Activated CD8-positive, alpha-beta T cell treated with anti-CD3 and anti-CD28 coated beads for 36 hours (primary cell): ENCODE measurements at regions of chr7 and their contacts with region 1.

Region 1: GRCh38 chr7:128209229-128210035 is 31.6 kb upstream of the LEP start:
- DNase-seq: peak; percentile 74
- ATAC-seq: peak; percentile 96
- H3K4me3 Mint-ChIP-seq: no peak overlapping the region
- H3K27ac Mint-ChIP-seq: no peak overlapping the region
- H3K4me1 Mint-ChIP-seq: no peaks in the 10 kb centered on the region
- H3K27me3 Mint-ChIP-seq: peaks cover 9% of the 10 kb centered on the region
- CTCF ChIP-seq: peak; percentile 96

Region 2: DNA sequence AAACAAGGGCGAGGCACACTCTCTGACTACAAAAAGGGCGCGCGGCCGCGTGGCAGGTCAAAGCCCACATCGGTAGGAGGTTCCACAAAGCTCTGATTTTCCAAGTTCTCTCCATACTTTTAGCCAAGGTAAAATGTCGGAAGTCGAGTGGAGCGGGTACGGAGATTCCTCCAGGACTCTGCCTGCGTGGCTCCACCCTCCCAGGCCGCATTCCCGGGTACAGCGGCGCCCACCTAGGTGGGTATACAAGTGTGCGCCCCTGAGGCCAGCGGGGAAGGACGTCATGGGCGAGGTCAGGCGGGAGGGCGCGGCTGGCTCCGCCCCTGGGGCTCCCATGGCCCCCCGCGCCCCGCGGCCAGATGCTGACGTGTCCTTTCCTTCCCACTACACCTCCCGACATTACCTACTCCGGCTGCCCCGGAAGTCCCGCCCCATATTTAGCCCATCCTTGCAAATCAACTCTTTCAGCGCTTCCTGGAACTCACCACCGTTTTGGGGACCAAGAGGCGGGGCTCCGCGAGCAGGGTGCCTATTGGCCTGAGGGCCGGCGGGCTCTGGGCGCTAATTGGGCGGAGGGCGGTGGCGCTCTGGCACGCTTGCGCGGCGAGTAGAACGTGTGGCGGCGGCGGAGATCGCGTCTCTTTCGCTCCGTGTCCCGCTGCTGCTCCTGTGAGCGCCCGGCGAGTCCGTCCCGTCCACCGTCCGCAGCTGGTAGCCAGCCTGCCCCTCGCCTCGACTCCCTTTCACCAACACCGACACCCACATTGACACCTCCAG is 557.7 kb before region 1 on chr7 and contains the start of gene SND1:
- CTCF ChIA-PET with region 1: no interaction called
- POLR2A ChIA-PET with region 1: no interaction called
- intact Hi-C with region 1: no loop called
- DNase-seq: peak; percentile 99
- ATAC-seq: peak; percentile 95
- H3K4me3 Mint-ChIP-seq: no peak within 1 kb of the TSS
- H3K27ac Mint-ChIP-seq: peak within 1 kb of the TSS; percentile 89
- H3K4me1 Mint-ChIP-seq: peaks cover 28% of the 10 kb centered on the region
- H3K27me3 Mint-ChIP-seq: no peaks in the 10 kb centered on the region
- CTCF ChIP-seq: no peak
- total RNA-seq, gene SND1: 206 to 208 TPM

Region 3: GRCh38 chr7:127708788-127709187 is 500.6 kb before region 1 on chr7:
- CTCF ChIA-PET with region 1: interaction called, 118 read pairs
- POLR2A ChIA-PET with region 1: no interaction called
- intact Hi-C with region 1: loop called (anchors 1 kb)
- DNase-seq: peak; percentile 84
- ATAC-seq: peak; percentile 72
- H3K4me3 Mint-ChIP-seq: no peak overlapping the region
- H3K27ac Mint-ChIP-seq: no peak overlapping the region
- H3K4me1 Mint-ChIP-seq: peaks cover 2% of the 10 kb centered on the region
- H3K27me3 Mint-ChIP-seq: no peaks in the 10 kb centered on the region
- CTCF ChIP-seq: peak; percentile 76

Region 4: DNA sequence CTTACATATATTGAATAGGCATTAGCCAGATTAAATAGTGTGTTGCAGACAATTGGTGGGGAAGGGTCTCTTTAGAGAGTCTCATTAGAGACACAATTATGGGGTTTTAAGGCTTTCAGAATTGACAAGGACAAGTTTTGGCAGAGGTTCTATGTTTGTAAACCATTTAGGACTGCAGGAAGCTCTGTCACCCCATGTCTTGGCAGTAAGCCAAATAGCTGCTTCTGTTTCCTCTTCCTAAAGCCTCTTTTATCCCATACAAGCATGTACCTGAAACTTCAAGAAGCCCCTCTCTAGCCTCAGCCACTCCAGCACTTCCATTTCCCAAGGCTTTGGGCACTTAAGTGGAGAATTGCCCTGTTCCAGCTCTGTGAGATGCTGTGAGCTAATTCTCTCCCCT is 156.4 kb before region 1 on chr7:
- CTCF ChIA-PET with region 1: interaction called, 11 read pairs
- POLR2A ChIA-PET with region 1: no interaction called
- intact Hi-C with region 1: no loop called
- DNase-seq: no peak
- ATAC-seq: no peak
- H3K4me3 Mint-ChIP-seq: no peak overlapping the region
- H3K27ac Mint-ChIP-seq: no peak overlapping the region
- H3K4me1 Mint-ChIP-seq: peaks cover 35% of the 10 kb centered on the region
- H3K27me3 Mint-ChIP-seq: no peaks in the 10 kb centered on the region
- CTCF ChIP-seq: no peak

Region 5: DNA sequence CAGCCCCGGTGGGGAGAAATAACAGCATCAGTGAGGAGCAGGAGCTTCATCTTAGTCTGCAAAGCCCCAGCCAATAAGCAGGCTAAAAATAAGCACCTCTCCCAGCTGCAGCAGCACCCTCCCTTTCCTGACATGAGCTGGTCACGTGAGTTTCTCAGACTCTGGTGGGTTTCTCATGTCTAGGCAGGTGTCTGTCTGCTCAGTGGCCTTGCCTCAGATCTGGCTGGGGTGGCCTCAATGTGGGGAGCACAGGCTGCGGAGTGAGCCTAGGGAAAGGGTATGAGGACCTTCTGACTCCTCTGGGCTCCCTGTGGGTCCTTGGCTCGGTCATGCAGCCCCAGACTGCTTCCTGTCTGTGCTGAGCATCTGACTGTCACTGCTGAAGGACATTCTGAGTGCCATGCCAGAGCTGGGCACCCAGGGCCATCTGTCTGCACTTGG is 96.6 kb before region 1 on chr7:
- CTCF ChIA-PET with region 1: interaction called, 16 read pairs
- POLR2A ChIA-PET with region 1: interaction called, 3 read pairs
- intact Hi-C with region 1: no loop called
- DNase-seq: no peak
- ATAC-seq: no peak
- H3K4me3 Mint-ChIP-seq: no peak overlapping the region
- H3K27ac Mint-ChIP-seq: no peak overlapping the region
- H3K4me1 Mint-ChIP-seq: peaks cover 46% of the 10 kb centered on the region
- H3K27me3 Mint-ChIP-seq: no peaks in the 10 kb centered on the region
- CTCF ChIP-seq: no peak

Region 6: GRCh38 chr7:128191136-128191844 is 18.1 kb before region 1 on chr7:
- CTCF ChIA-PET with region 1: interaction called, 12 read pairs
- POLR2A ChIA-PET with region 1: no interaction called
- intact Hi-C with region 1: no loop called
- DNase-seq: no peak
- ATAC-seq: no peak
- H3K4me3 Mint-ChIP-seq: no peak overlapping the region
- H3K27ac Mint-ChIP-seq: no peak overlapping the region
- H3K4me1 Mint-ChIP-seq: no peaks in the 10 kb centered on the region
- H3K27me3 Mint-ChIP-seq: peaks cover 27% of the 10 kb centered on the region
- CTCF ChIP-seq: no peak

Region 7: GRCh38 chr7:128259131-128259800 is 49.8 kb after region 1 on chr7:
- CTCF ChIA-PET with region 1: no interaction called
- POLR2A ChIA-PET with region 1: no interaction called
- intact Hi-C with region 1: no loop called
- DNase-seq: no peak
- ATAC-seq: no peak
- H3K4me3 Mint-ChIP-seq: no peak overlapping the region
- H3K27ac Mint-ChIP-seq: no peak overlapping the region
- H3K4me1 Mint-ChIP-seq: no peaks in the 10 kb centered on the region
- H3K27me3 Mint-ChIP-seq: no peaks in the 10 kb centered on the region
- CTCF ChIP-seq: no peak